Activated CD8-positive, alpha-beta T cell treated with anti-CD3 and anti-CD28 coated beads for 36 hours (primary cell): ENCODE measurements at regions of chr12 and their contacts with region 1.

Region 1: GRCh38 chr12:96219698-96220206 is 25.6 kb downstream of the ELK3 start:
- DNase-seq: no peak
- ATAC-seq: no peak
- H3K4me3 Mint-ChIP-seq: no peak overlapping the region
- H3K27ac Mint-ChIP-seq: peak overlapping the region; percentile 3
- H3K4me1 Mint-ChIP-seq: peaks cover 27% of the 10 kb centered on the region
- H3K27me3 Mint-ChIP-seq: no peaks in the 10 kb centered on the region
- CTCF ChIP-seq: no peak

Region 2: DNA sequence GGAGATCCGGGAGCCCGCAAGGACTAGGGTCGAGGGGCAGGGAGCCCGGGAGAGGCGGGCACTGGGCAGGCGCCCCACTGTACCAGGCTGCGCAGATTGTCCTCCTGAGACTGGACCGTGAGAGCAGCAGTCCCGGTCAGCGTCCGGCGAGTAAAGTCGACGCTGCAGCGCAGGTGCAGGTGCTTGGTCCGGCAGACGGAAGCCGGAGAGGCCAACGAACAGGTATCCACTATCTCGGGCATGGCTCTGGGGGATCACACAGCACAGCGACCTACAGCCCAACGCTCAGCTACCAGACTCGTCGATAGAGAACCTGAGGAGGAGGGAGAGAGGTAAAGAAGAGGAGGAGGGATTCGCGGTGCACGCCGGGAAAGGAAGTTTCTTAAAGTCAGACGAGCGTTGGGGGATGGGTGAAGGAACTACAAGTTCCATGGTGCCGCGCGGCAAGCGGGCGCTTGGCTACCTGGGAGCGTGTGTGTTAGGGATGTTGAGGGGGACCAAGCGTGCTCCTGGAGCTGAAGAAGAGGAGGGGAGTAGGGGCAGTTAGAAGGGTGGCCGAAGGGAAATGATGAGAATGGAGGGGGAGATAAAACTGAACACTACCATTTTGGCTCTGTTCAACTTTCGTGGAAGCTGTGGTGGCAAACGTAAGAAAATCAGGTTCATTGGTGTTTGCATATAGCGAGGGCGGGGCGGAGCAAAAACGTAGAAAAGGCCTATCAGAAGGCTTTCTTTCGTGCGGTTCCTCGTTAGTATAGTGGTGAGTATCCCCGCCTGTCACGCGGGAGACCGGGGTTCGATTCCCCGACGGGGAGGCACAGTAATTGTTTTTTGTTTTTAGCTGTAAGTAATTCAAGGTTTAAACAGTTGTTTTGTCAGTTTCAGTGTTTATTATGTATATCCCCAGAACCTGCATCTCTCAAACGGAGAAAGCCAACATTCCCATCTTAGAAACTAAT is 184.2 kb before region 1 on chr12 and contains the start of gene LTA4H:
- CTCF ChIA-PET with region 1: interaction called, 12 read pairs
- POLR2A ChIA-PET with region 1: no interaction called
- intact Hi-C with region 1: no loop called
- DNase-seq: peak; percentile 100
- ATAC-seq: peak; percentile 96
- H3K4me3 Mint-ChIP-seq: no peak within 1 kb of the TSS
- H3K27ac Mint-ChIP-seq: no peak within 1 kb of the TSS
- H3K4me1 Mint-ChIP-seq: peaks cover 15% of the 10 kb centered on the region
- H3K27me3 Mint-ChIP-seq: no peaks in the 10 kb centered on the region
- CTCF ChIP-seq: no peak
- total RNA-seq, gene LTA4H: 112 TPM

Region 3: DNA sequence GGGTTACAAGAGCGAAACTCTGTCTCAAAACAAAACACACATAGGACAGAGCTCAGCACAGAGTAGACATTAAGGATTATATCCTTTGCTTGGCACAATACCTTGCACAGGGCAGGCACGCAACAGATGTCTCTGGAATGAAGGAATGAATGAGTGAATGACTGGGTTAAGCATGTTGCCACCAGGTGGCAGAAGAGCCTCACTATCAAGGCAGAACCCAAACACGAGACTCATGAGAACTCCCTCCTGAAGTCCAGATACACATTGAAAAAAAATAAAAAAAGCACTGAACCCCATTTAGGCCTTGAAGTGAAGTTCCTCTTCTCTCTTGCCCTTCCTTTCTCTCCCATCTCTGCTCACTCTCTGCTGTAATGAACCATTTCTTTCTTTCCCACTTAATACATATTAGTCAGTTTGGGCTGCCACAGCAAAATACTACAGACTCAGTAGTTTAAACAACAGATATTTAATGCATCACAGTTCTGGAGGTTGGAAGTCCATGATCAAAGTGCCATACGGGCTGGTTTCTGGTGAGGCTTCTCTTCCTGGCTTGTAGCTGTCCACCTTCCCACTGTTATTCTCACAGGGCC is 157.8 kb before region 1 on chr12:
- CTCF ChIA-PET with region 1: interaction called, 79 read pairs
- POLR2A ChIA-PET with region 1: interaction called, 4 read pairs
- intact Hi-C with region 1: loop called (anchors 1 kb)
- DNase-seq: peak; percentile 88
- ATAC-seq: peak; percentile 91
- H3K4me3 Mint-ChIP-seq: no peak overlapping the region
- H3K27ac Mint-ChIP-seq: no peak overlapping the region
- H3K4me1 Mint-ChIP-seq: peaks cover 22% of the 10 kb centered on the region
- H3K27me3 Mint-ChIP-seq: no peaks in the 10 kb centered on the region
- CTCF ChIP-seq: peak; percentile 70

Region 4: GRCh38 chr12:96194971-96195844 is 24.5 kb before region 1 on chr12:
- CTCF ChIA-PET with region 1: interaction called, 10 read pairs
- POLR2A ChIA-PET with region 1: interaction called, 3 read pairs
- intact Hi-C with region 1: loop called (anchors 2 kb)
- DNase-seq: peak; percentile 85
- ATAC-seq: peak; percentile 72
- H3K4me3 Mint-ChIP-seq: peak overlapping the region; percentile 82
- H3K27ac Mint-ChIP-seq: peak overlapping the region; percentile 95
- H3K4me1 Mint-ChIP-seq: peaks cover 58% of the 10 kb centered on the region
- H3K27me3 Mint-ChIP-seq: no peaks in the 10 kb centered on the region
- CTCF ChIP-seq: no peak

Region 5: DNA sequence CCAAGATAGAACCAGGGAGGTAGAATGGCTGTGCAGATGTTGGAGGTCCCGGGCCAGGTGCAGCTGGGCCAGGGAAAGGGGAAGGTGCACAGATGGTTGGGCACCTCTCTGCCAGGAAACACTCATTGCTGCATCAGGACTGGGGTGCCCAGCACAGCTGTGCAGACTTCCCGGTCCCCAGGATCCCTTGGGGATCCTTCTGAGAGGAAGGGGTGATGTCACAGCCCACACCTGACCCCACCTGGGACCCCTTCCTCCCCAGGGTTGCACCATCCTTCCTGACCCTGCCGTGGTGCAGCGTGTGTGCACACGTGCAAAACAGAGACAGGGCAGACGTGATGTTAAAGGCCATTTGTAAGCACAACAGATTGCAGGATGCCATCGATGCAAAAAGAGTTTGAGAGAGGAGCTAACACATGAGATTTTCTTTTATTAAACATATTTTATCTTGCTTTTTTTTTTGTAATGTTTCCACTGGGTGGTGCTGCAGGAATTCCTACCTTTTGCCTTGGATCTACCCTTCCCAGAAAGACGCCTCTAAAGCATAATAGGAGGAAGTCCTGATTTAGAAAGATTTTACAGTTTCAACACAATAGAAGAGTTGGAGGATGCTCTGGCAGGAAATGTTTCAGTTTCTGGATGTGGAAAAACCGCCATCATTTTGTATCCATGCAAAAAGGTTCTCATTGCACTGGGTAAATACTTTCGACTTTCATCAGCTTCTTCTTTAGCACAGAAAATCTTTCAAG is 10.8 kb before region 1 on chr12:
- CTCF ChIA-PET with region 1: interaction called, 16 read pairs
- POLR2A ChIA-PET with region 1: interaction called, 3 read pairs
- intact Hi-C with region 1: no loop called
- DNase-seq: no peak
- ATAC-seq: no peak
- H3K4me3 Mint-ChIP-seq: peak overlapping the region; percentile 9
- H3K27ac Mint-ChIP-seq: peak overlapping the region; percentile 43
- H3K4me1 Mint-ChIP-seq: peaks cover 90% of the 10 kb centered on the region
- H3K27me3 Mint-ChIP-seq: no peaks in the 10 kb centered on the region
- CTCF ChIP-seq: no peak